Activated naive CD4-positive, alpha-beta T cell treated with anti-CD3 and anti-CD28 coated beads for 36 hours (primary cell): ENCODE measurements at regions of chr10 and their contacts with region 1.

Region 1: GRCh38 chr10:17216217-17216900 is 11.7 kb upstream of the VIM start:
- DNase-seq: peak; percentile 55
- H3K4me3 Mint-ChIP-seq: no peak overlapping the region
- H3K27ac Mint-ChIP-seq: peak overlapping the region; percentile 54
- H3K4me1 Mint-ChIP-seq: peaks cover 33% of the 10 kb centered on the region
- H3K27me3 Mint-ChIP-seq: no peaks in the 10 kb centered on the region

Region 2: DNA sequence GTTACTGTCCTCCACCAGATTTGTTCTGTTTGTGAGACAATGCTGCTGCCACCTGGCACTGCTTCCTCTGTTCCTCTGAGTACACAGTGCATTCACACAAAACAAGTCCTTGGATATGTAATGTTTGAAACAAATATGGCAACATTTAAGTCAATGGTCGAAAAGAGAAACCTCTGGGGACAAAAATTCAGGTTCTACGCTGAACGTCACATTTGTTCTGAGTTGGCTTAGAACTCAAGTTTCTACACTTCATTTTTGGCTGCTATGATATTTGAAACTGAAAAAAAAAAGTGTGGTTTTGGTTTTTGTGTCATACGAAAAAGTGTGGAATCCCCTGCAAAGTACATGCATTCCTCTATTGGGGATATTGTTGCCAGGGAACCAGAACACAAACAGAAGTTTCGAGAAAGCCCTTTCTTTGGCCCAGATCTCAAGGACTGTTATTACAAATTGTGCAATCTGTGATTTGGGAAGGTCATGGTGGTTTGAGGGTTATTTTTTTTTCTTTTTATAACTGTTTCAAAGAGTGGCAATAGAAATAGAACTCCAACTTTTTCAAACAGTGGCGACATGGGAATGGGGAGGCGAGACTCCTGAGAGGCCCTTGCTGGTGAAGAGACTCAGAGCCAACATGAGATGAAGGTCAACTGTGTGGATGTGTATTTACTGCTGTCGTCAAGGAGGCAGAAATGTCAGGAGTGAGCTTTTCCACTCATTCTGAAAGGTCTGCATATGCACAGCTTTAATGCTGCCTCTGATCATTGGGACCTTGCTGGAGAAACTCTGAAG is 214.2 kb before region 1 on chr10:
- CTCF ChIA-PET with region 1: no interaction called
- intact Hi-C with region 1: loop called (anchors 1 kb)
- DNase-seq: peak; percentile 44
- H3K4me3 Mint-ChIP-seq: no peak overlapping the region
- H3K27ac Mint-ChIP-seq: peak overlapping the region; percentile 5
- H3K4me1 Mint-ChIP-seq: peaks cover 57% of the 10 kb centered on the region
- H3K27me3 Mint-ChIP-seq: peaks cover 5% of the 10 kb centered on the region

Region 3: DNA sequence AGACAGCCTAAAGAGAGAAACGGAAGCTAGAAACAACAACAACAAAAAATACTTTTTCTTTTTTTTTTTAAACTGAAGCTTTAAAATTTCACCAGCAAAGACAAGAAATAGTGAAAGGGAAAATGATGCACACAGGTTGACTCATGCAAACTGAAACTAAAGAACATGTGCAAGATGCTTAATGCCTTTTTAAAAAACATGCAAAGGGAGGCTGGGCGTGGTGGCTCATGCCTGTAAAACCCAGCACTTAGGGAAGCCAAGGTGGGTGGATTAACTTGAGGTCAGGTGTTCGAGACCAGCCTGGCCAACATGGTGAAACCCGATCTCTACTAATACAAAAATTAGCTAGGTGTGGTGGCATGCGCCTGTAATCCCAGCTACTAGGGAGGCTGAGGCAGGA is 71.6 kb before region 1 on chr10:
- CTCF ChIA-PET with region 1: no interaction called
- intact Hi-C with region 1: loop called (anchors 1 kb)
- DNase-seq: peak; percentile 84
- H3K4me3 Mint-ChIP-seq: no peak overlapping the region
- H3K27ac Mint-ChIP-seq: peak overlapping the region; percentile 47
- H3K4me1 Mint-ChIP-seq: peaks cover 28% of the 10 kb centered on the region
- H3K27me3 Mint-ChIP-seq: no peaks in the 10 kb centered on the region

Region 4: DNA sequence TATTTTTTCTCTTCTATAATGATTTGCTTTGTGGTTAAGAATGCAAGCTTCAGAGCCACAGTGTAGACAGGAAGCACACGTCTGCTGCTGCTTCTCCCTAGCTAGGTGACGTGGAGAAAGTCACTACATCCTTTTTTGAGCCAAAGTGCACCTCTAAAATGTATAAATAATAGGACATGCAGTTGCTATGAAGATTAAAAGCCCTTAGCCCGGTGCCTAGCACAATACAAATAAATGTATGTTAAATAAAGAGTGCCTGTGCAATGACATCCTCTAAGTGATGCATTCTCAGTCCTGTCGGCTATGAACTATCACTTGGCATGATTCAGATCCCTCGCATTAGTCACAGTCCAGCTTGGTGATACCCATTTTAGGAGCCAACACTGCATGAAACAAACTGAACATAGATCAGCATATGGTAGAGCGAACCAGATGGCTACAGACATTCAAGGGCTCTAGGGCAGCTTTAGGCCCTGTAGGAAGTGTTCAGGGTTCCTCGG is 10.1 kb before region 1 on chr10:
- CTCF ChIA-PET with region 1: interaction called, 10 read pairs
- intact Hi-C with region 1: loop called (anchors 1 kb)
- DNase-seq: peak; percentile 60
- H3K4me3 Mint-ChIP-seq: peak overlapping the region; percentile 3
- H3K27ac Mint-ChIP-seq: peak overlapping the region; percentile 54
- H3K4me1 Mint-ChIP-seq: peaks cover 23% of the 10 kb centered on the region
- H3K27me3 Mint-ChIP-seq: no peaks in the 10 kb centered on the region

Region 5: GRCh38 chr10:18651324-18652007 is 1435.1 kb after region 1 on chr10 and contains the start of gene NSUN6:
- CTCF ChIA-PET with region 1: no interaction called
- intact Hi-C with region 1: loop called (anchors 5 kb)
- DNase-seq: peak; percentile 95
- H3K4me3 Mint-ChIP-seq: peak within 1 kb of the TSS; percentile 93
- H3K27ac Mint-ChIP-seq: peak within 1 kb of the TSS; percentile 94
- H3K4me1 Mint-ChIP-seq: peaks cover 28% of the 10 kb centered on the region
- H3K27me3 Mint-ChIP-seq: no peaks in the 10 kb centered on the region
- total RNA-seq, gene NSUN6: 9.8 to 11.1 TPM